Ovary (tissue), 10 donors: ENCODE measurements at regions of chr21 and their contacts with region 1.

Region 1: DNA sequence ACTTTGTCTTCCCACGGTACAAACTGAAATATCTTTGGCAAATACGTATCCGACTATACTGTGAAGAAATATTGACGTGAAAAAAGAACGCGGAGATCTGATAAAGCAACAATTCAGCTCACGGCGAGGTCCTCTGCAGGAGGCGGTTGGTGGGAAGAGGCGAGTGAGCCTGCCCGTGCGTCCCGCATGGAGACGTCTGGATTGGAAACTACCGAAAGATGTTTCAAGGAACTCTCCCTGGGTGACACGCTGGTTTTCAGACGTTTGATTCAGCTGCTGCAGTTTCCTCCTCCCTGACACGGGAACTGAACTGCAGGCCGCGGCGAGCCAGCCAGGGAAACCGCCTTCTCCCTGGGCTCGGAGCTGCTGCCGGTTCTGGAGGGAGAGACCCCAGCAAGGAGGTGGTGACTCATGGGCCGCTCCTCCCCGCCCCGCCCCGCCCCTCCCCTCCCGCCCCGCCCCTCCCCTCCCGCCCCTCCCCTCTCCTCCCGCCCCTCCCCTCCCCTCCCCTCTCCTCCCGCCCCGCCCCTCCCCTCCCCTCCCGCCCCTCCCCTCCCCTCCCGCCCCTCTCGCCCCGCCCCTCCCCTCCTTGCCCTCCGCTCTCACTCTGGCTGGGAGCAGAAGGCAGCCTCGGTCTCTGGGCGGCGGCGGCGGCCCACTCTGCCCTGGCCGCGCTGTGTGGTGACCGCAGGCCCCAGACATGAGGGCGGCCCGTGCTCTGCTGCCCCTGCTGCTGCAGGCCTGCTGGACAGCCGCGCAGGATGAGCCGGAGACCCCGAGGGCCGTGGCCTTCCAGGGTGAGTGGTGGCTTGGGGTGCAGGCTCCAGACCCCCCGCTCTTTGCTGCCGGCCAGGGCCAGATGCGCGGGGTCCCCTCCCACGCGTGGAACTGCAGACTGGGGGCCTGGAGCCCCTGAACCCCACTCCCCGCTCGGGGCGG is at the start of gene COL6A1:
- DNase-seq: peak; percentile 87 to 90 (median 89)
- H3K4me3 ChIP-seq: peak within 1 kb of the TSS; percentile 99
- H3K27ac ChIP-seq: peak within 1 kb of the TSS; percentile 65 to 74
- H3K4me1 ChIP-seq: peaks cover 13% of the 10 kb centered on the region
- H3K27me3 ChIP-seq: no peaks in the 10 kb centered on the region
- CTCF ChIP-seq: no peak
- EP300 ChIP-seq: peak; percentile 31
- POLR2A ChIP-seq: peak; percentile 66
- total RNA-seq, gene COL6A1: 389 to 779 (median 731) TPM

Region 2: DNA sequence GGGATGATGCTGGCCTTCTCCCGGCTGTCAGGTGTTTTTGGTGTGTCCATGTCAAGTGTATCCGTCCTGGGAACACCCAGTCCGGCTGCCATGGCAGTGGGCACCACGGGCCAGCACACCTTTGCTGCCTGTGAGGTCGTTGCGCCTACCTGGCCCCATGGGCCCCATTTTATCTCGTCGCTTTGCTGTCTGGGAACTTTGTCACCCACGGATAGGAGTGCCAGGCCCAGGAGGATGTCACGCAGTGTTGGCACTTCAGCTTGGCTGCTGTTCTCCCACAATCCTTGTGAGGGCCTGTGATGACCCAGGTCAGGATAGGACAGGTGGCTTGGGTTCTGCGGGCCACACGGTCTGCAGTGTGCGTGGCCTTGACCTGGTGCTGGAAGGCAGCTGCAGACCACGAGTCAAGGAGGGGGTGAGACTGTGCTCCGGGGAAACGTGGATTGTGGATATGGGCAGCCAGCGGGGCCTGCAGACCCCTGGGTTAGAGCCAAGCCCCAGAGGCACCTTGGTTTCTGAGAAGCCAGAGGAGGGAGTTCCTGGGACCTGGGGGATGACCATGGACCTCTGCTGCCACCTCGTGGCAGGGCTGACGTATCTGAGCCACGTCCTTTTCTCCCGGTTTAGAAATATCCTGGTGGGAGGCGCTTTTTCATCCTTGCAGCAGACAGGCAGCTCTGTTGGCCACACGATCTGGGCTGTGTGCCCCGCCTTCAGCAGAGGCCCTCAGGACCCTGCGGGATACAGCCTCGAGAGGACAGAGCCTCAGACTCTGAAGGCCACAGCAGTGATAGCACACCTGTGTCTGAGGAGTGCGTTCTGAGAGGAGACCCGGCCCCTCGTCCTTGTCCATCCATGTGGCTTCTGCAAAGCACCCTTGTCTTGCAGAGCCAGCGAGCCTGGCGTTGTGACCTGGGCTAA is 161.0 kb before region 1 on chr21:
- intact Hi-C with region 1: no loop called
- DNase-seq: peak; percentile 68 to 88 (median 82)
- H3K4me3 ChIP-seq: no peak overlapping the region
- H3K27ac ChIP-seq: no peak overlapping the region
- H3K4me1 ChIP-seq: peaks cover 3% of the 10 kb centered on the region
- H3K27me3 ChIP-seq: no peaks in the 10 kb centered on the region
- CTCF ChIP-seq: peak; percentile 63 to 72 (median 66)
- EP300 ChIP-seq: no peak
- POLR2A ChIP-seq: no peak

Region 3: GRCh38 chr21:45937721-45938452 is 43.5 kb before region 1 on chr21:
- intact Hi-C with region 1: no loop called
- DNase-seq: no peak
- H3K4me3 ChIP-seq: no peak overlapping the region
- H3K27ac ChIP-seq: no peak overlapping the region
- H3K4me1 ChIP-seq: no peaks in the 10 kb centered on the region
- H3K27me3 ChIP-seq: no peaks in the 10 kb centered on the region
- CTCF ChIP-seq: no peak
- EP300 ChIP-seq: no peak
- POLR2A ChIP-seq: no peak

Region 4: GRCh38 chr21:46022551-46023525 is 41.4 kb after region 1 on chr21:
- intact Hi-C with region 1: loop called in 1 of 4 experiments (anchors 5 kb)
- DNase-seq: peak in 4 of 5 donors; percentile 40 to 64 (median 50)
- H3K4me3 ChIP-seq: no peak overlapping the region
- H3K27ac ChIP-seq: peak overlapping the region; percentile 1 to 44
- H3K4me1 ChIP-seq: peaks cover 18% of the 10 kb centered on the region
- H3K27me3 ChIP-seq: no peaks in the 10 kb centered on the region
- CTCF ChIP-seq: no peak
- EP300 ChIP-seq: no peak
- POLR2A ChIP-seq: no peak